ENCODE measurements at regions of chr11 and their contacts with region 1.

Region 1: DNA sequence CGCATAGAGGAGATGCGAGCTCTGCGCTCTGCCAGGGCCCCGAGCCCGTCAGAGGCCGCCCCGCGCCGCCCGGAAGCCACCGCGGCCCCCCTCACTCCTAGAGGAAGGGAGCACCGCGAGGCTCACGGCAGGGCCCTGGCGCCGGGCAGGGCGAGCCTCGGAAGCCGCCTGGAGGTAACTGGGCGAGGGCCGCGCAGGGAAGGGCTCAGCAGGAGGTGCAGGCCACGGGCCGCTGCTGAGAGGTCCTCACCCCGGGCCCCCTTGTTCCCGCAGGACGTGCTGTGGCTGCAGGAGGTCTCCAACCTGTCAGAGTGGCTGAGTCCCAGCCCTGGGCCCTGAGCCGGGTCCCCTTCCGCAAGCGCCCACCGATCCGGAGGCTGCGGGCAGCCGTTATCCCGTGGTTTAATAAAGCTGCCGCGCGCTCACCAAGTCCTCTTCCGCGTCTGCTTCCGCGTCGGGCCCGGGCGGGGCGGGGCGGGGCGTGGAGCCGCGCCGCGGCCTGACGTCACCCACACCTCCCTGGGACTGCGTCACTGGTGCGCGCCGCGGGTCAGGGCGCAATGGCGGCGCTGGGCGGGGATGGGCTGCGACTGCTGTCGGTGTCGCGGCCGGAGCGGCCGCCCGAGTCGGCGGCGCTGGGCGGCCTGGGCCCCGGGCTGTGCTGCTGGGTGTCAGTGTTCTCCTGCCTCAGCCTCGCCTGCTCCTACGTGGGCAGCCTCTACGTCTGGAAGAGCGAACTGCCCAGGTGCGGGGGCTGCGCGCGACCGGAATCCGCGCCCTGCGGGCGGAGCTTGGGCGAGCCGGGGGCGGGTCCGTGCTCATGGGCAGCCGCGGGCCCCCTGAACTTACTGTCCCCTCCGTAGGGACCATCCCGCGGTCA is at the start of gene RCE1:
- DNase-seq: peak; percentile 91

Region 2: GRCh38 chr11:66677599-66678375 is 165.3 kb before region 1 on chr11 and contains the start of gene RBM4B:
- in situ Hi-C with region 1: loop called (anchors 25 kb)
- DNase-seq: peak; percentile 98